ENCODE measurements at regions of chr12 and their contacts with region 1.

Region 1: GRCh38 chr12:47715393-47715876 is 9.6 kb upstream of the RPAP3 start:
- DNase-seq: peak; percentile 54
- ATAC-seq: peak; percentile 87
- H3K4me3 Mint-ChIP-seq: no peak overlapping the region
- H3K27ac Mint-ChIP-seq: no peak overlapping the region
- H3K4me1 Mint-ChIP-seq: peaks cover 37% of the 10 kb centered on the region
- H3K27me3 Mint-ChIP-seq: no peaks in the 10 kb centered on the region
- CTCF ChIP-seq: peak; percentile 18

Region 2: GRCh38 chr12:47408171-47408871 is 307.1 kb before region 1 on chr12:
- CTCF ChIA-PET with region 1: no interaction called
- POLR2A ChIA-PET with region 1: no interaction called
- intact Hi-C with region 1: no loop called
- DNase-seq: peak; percentile 46
- ATAC-seq: peak; percentile 97
- H3K4me3 Mint-ChIP-seq: no peak overlapping the region
- H3K27ac Mint-ChIP-seq: peak overlapping the region; percentile 63
- H3K4me1 Mint-ChIP-seq: peaks cover 28% of the 10 kb centered on the region
- H3K27me3 Mint-ChIP-seq: no peaks in the 10 kb centered on the region
- CTCF ChIP-seq: no peak

Region 3: GRCh38 chr12:47742253-47742825 is 26.9 kb after region 1 on chr12:
- CTCF ChIA-PET with region 1: interaction called, 111 read pairs
- POLR2A ChIA-PET with region 1: interaction called, 4 read pairs
- intact Hi-C with region 1: loop called (anchors 1 kb)
- DNase-seq: peak; percentile 71
- ATAC-seq: peak; percentile 20
- H3K4me3 Mint-ChIP-seq: no peak overlapping the region
- H3K27ac Mint-ChIP-seq: peak overlapping the region; percentile 1
- H3K4me1 Mint-ChIP-seq: peaks cover 73% of the 10 kb centered on the region
- H3K27me3 Mint-ChIP-seq: no peaks in the 10 kb centered on the region
- CTCF ChIP-seq: no peak

Region 4: DNA sequence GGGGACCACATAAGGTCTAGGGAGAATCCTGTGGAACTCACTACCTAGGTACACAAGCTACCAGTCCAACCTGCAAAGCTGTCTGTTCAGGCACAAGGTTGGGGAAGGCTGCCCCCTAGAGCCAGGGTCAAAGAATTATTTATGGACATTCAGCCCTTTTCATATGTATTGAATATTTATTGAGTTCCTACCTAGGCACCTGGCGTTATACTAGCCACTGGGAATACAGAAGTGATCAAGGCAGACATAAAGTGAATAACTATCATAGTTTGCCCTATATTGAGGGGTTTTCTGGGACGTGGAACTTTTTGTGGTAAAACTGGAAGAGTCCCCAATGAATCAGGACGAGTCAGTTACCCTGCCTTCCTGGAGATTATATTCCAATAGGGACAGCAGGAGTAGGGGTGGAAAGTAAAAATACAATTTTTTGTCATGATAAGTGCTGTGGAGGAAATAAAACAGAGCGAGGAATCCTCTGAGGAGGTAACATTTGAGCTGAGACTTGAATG is 51.8 kb after region 1 on chr12:
- CTCF ChIA-PET with region 1: interaction called, 134 read pairs
- POLR2A ChIA-PET with region 1: interaction called, 6 read pairs
- intact Hi-C with region 1: loop called (anchors 1 kb)
- DNase-seq: peak; percentile 52
- ATAC-seq: peak; percentile 84
- H3K4me3 Mint-ChIP-seq: no peak overlapping the region
- H3K27ac Mint-ChIP-seq: no peak overlapping the region
- H3K4me1 Mint-ChIP-seq: peaks cover 9% of the 10 kb centered on the region
- H3K27me3 Mint-ChIP-seq: no peaks in the 10 kb centered on the region
- CTCF ChIP-seq: no peak

Region 5: GRCh38 chr12:47779301-47779942 is 64.0 kb after region 1 on chr12:
- CTCF ChIA-PET with region 1: interaction called, 52 read pairs
- POLR2A ChIA-PET with region 1: no interaction called
- intact Hi-C with region 1: loop called (anchors 1 kb)
- DNase-seq: peak; percentile 90
- ATAC-seq: peak; percentile 93
- H3K4me3 Mint-ChIP-seq: no peak overlapping the region
- H3K27ac Mint-ChIP-seq: peak overlapping the region; percentile 41
- H3K4me1 Mint-ChIP-seq: peaks cover 15% of the 10 kb centered on the region
- H3K27me3 Mint-ChIP-seq: no peaks in the 10 kb centered on the region
- CTCF ChIP-seq: no peak

Region 6: GRCh38 chr12:47949441-47950308 is 234.2 kb after region 1 on chr12:
- CTCF ChIA-PET with region 1: no interaction called
- POLR2A ChIA-PET with region 1: no interaction called
- intact Hi-C with region 1: loop called (anchors 1 kb)
- DNase-seq: no peak
- ATAC-seq: peak; percentile 69
- H3K4me3 Mint-ChIP-seq: no peak overlapping the region
- H3K27ac Mint-ChIP-seq: no peak overlapping the region
- H3K4me1 Mint-ChIP-seq: no peaks in the 10 kb centered on the region
- H3K27me3 Mint-ChIP-seq: peaks cover 29% of the 10 kb centered on the region
- CTCF ChIP-seq: no peak

Region 7: DNA sequence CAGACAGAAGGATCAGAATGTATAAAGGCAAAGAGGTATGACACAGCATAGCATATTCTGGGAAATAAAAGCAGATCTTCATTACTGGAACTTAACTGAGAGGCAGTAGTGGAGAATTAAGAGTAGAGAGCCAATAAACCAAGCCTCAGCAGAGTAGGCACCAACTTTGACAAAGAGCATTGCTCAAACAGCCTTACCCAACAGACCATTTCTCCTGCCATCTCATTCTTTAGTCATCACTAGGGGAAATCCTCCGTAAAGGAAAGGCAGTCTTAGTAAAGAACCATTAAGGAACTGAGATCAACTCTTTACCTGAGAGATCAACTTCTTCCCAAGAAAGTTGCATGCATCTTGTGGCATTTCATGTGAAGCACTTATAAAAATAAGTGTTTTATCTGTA is 353.8 kb after region 1 on chr12:
- CTCF ChIA-PET with region 1: no interaction called
- POLR2A ChIA-PET with region 1: no interaction called
- intact Hi-C with region 1: no loop called
- DNase-seq: no peak
- ATAC-seq: no peak
- H3K4me3 Mint-ChIP-seq: no peak overlapping the region
- H3K27ac Mint-ChIP-seq: no peak overlapping the region
- H3K4me1 Mint-ChIP-seq: no peaks in the 10 kb centered on the region
- H3K27me3 Mint-ChIP-seq: no peaks in the 10 kb centered on the region
- CTCF ChIP-seq: no peak

Region 8: DNA sequence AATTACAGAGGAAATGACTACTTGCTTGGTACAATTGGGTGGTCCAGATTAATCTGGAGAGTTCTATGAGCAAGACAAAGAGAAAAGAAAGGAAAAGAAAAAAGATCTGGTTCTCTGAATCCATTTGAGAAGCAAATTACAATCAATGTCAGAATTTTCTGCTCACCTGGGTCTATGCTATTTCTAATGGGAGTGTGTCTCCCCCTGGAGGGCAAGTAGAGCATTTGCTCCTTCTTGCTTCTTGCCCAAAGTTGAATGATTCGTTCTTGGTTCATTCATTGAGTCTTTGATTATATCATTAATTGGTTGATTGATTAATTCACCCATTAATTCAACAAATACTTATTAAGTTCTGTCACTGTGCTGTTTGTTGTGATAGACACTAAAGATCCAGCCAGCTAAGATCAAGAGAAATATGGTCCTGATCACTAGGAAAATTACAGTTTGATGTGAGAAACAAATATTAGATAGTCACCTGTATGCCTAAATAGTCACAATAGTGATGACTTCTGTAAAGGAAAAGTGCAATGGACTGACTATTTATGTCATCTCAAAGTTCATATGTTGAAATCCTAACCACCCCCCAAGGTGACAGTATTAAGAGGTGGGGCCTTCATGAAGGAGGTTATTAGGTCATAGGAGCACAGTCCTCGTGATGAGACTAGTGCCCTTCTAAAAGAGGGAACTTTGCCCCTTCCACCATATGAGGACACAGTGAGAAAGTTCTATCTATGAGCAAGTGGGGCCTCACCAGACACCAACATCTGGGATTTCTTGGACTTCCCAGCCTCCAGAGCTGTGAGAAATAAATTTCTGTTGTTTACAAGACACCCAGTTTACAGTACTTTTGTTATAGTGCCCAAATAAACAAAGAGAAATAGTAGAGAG is 449.9 kb after region 1 on chr12:
- CTCF ChIA-PET with region 1: no interaction called
- POLR2A ChIA-PET with region 1: no interaction called
- intact Hi-C with region 1: loop called (anchors 2 kb)
- DNase-seq: no peak
- ATAC-seq: peak; percentile 73
- H3K4me3 Mint-ChIP-seq: no peak overlapping the region
- H3K27ac Mint-ChIP-seq: no peak overlapping the region
- H3K4me1 Mint-ChIP-seq: no peaks in the 10 kb centered on the region
- H3K27me3 Mint-ChIP-seq: peaks cover 12% of the 10 kb centered on the region
- CTCF ChIP-seq: peak; percentile 69